ENCODE measurements at regions of chr15 and their contacts with region 1.

Region 1: GRCh38 chr15:80679167-80680131 is 15.7 kb upstream of the ABHD17C start:
- DNase-seq: no peak
- ATAC-seq: no peak
- H3K4me3 ChIP-seq: no peak overlapping the region
- H3K4me3 Mint-ChIP-seq: no peak overlapping the region
- H3K27ac ChIP-seq: no peak overlapping the region
- H3K27ac Mint-ChIP-seq: no peak overlapping the region
- H3K4me1 ChIP-seq: peaks cover 4% of the 10 kb centered on the region
- H3K4me1 Mint-ChIP-seq: no peaks in the 10 kb centered on the region
- H3K27me3 ChIP-seq: peaks cover 6 to 12% of the 10 kb centered on the region in 2 experiments
- H3K27me3 Mint-ChIP-seq: peaks cover 51% of the 10 kb centered on the region
- CTCF ChIP-seq: no peak

Region 2: GRCh38 chr15:79596051-79596507 is 1083.4 kb before region 1 on chr15:
- CTCF ChIA-PET with region 1: no interaction called
- POLR2A ChIA-PET with region 1: no interaction called
- intact Hi-C with region 1: loop called in 1 of 2 experiments (anchors 5 kb)
- DNase-seq: peak in 6 of 14 experiments; percentile 2 to 72 (median 30)
- ATAC-seq: peak; percentile 78
- H3K4me3 ChIP-seq: no peak overlapping the region
- H3K4me3 Mint-ChIP-seq: no peak overlapping the region
- H3K27ac ChIP-seq: no peak overlapping the region
- H3K27ac Mint-ChIP-seq: no peak overlapping the region
- H3K4me1 ChIP-seq: no peaks in the 10 kb centered on the region
- H3K4me1 Mint-ChIP-seq: no peaks in the 10 kb centered on the region
- H3K27me3 ChIP-seq: no peaks in the 10 kb centered on the region
- H3K27me3 Mint-ChIP-seq: peaks cover 39% of the 10 kb centered on the region
- CTCF ChIP-seq: peak; percentile 42